ENCODE measurements at regions of chr11 and their contacts with region 1.

Region 1: DNA sequence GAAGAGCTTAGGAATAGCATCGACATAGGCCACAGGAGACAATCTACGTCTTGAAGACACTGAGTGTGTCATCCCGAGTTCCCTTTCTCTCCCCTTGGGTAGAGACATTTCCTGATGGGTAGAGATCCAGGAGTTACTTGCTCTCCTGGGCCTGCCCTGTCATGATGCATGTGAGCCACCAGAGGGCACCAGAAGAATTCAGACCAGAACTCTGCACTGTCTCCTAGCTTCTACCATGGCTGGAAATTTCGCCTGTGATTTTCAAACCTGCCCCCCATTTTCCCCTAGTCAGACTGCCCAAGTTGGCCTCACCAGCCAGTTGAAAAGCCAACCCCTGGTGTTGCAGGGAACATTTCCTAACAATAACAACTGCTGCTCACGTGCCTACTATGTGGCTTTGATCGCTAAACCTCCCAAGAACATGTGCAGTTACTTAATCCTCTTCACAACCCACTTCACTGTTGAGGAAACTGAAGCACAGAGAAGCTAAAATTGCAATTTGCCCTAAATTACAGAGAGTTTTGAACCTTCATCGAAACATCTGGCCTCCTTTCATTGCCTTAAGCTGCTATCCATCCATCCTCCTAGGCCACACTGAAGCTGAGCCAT is 47.2 kb downstream of the C11orf58 start:
- DNase-seq: peak; percentile 75
- ATAC-seq: peak; percentile 95
- H3K4me3 ChIP-seq: no peak overlapping the region
- H3K27ac ChIP-seq: no peak overlapping the region
- H3K4me1 ChIP-seq: no peaks in the 10 kb centered on the region
- H3K27me3 ChIP-seq: no peaks in the 10 kb centered on the region; the same call in 1 of the 2 replicates
- CTCF ChIP-seq: peak; percentile 85
- POLR2A ChIP-seq: no peak
- RAD21 ChIP-seq: peak; percentile 79

Region 2: GRCh38 chr11:16881074-16881709 is 95.6 kb after region 1 on chr11:
- CTCF ChIA-PET with region 1: no interaction called
- POLR2A ChIA-PET with region 1: no interaction called
- dilution Hi-C with region 1: no loop called
- in situ Hi-C with region 1: no loop called
- intact Hi-C with region 1: loop called (anchors 5 kb)
- DNase-seq: peak; percentile 13
- ATAC-seq: no peak
- H3K4me3 ChIP-seq: no peak overlapping the region
- H3K27ac ChIP-seq: no peak overlapping the region
- H3K4me1 ChIP-seq: no peaks in the 10 kb centered on the region
- H3K27me3 ChIP-seq: peaks cover 12% of the 10 kb centered on the region
- CTCF ChIP-seq: 0 out of 2 replicates have a peak, but pooled peaks have one; percentile 7
- POLR2A ChIP-seq: no peak
- RAD21 ChIP-seq: peak; percentile 14; the same call in 1 of the 2 replicates

Region 3: DNA sequence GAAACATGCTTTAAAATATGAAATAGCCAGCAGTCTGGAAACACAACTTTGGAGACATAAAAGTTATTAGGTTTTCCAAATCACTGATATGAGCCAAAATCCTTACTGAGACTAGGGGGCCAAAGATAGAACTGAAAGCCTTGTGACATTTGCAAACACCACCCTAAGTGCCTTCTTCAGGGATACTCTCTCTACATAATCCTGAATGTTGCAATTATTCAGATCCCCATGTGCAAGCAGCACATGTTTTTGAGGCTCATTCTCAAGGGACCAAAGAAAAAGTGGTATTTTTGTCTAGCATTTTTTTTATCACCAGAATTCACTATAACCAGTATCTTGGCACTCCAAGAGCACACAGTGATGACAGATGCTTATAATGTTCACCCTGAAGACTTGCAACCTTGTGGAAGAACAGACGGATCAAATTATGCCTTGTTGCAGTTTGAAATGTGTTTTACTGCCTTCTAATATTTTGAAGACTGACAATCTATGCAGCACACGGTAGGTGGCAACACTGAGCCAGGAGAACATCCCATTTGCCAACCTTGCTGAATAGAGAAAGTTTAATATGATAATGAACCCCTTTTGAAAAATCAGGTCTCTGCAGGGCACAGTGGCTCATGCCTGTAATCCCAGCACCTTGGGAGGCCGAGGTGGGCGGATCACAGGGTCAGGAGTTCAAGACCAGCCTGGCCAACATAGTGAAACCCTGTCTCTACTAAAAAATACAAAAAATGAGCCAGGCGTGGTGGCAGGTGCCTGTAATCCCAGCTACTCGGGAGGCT is 150.1 kb after region 1 on chr11:
- CTCF ChIA-PET with region 1: interaction called, 6 read pairs
- POLR2A ChIA-PET with region 1: no interaction called
- dilution Hi-C with region 1: no loop called
- in situ Hi-C with region 1: no loop called
- intact Hi-C with region 1: loop called (anchors 5 kb)
- DNase-seq: peak; percentile 36
- ATAC-seq: peak; percentile 86
- H3K4me3 ChIP-seq: no peak overlapping the region
- H3K27ac ChIP-seq: no peak overlapping the region
- H3K4me1 ChIP-seq: no peaks in the 10 kb centered on the region
- H3K27me3 ChIP-seq: peaks cover 14% of the 10 kb centered on the region
- CTCF ChIP-seq: peak; percentile 73
- POLR2A ChIP-seq: no peak
- RAD21 ChIP-seq: peak; percentile 59

Region 4: DNA sequence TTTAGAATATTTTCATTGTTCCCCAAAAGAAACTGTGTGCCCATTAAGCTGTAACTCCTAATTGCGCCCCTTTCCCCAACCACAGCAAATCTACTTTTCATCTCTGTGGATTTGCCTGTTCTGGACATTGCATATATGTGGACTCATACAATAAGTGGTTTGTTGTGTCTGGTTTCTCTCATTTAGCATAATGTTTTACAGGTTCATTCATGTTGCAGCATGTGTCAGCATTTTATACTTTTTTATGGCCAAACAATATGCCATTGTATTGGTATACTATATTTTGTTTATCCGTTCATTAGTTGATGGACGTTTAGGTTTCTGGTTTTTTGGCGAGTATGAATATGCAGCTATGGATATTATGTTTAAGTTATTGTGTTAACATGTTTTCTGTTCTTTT is 514.7 kb after region 1 on chr11:
- CTCF ChIA-PET with region 1: no interaction called
- POLR2A ChIA-PET with region 1: no interaction called
- dilution Hi-C with region 1: no loop called
- in situ Hi-C with region 1: no loop called
- intact Hi-C with region 1: no loop called
- DNase-seq: no peak
- ATAC-seq: no peak
- H3K4me3 ChIP-seq: no peak overlapping the region
- H3K27ac ChIP-seq: no peak overlapping the region
- H3K4me1 ChIP-seq: peaks cover 3% of the 10 kb centered on the region
- H3K27me3 ChIP-seq: no peaks in the 10 kb centered on the region
- CTCF ChIP-seq: no peak
- POLR2A ChIP-seq: no peak
- RAD21 ChIP-seq: no peak